Activated CD4-positive, alpha-beta T cell treated with anti-CD3 and anti-CD28 coated beads for 36 hours (primary cell): ENCODE measurements at regions of chr17 and their contacts with region 1.

Region 1: DNA sequence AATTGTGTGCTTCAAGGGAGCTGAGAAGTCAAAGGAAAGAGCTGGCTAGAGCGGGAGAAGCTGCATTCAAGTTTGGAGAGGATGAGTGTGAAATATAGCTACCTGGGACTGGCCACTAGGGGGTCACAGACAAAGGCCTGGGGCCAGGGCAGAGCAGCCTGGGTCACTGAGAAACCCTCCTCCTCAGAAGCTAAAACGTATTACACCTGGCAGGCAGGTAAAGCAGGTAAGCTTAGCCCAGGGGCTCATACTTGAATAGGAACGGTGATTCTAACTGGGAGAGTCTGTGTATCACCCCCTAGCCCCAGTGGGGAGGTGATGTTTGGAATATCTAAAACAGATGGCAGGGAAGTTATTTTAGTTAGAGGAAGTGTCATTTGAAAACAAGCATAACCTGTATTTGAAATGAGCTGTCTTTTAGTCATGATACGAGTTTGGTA is 6.8 kb downstream of the KRT37 start:
- DNase-seq: no peak
- ATAC-seq: no peak
- H3K4me3 Mint-ChIP-seq: no peak overlapping the region
- H3K27ac Mint-ChIP-seq: no peak overlapping the region
- H3K4me1 Mint-ChIP-seq: no peaks in the 10 kb centered on the region
- H3K27me3 Mint-ChIP-seq: no peaks in the 10 kb centered on the region

Region 2: DNA sequence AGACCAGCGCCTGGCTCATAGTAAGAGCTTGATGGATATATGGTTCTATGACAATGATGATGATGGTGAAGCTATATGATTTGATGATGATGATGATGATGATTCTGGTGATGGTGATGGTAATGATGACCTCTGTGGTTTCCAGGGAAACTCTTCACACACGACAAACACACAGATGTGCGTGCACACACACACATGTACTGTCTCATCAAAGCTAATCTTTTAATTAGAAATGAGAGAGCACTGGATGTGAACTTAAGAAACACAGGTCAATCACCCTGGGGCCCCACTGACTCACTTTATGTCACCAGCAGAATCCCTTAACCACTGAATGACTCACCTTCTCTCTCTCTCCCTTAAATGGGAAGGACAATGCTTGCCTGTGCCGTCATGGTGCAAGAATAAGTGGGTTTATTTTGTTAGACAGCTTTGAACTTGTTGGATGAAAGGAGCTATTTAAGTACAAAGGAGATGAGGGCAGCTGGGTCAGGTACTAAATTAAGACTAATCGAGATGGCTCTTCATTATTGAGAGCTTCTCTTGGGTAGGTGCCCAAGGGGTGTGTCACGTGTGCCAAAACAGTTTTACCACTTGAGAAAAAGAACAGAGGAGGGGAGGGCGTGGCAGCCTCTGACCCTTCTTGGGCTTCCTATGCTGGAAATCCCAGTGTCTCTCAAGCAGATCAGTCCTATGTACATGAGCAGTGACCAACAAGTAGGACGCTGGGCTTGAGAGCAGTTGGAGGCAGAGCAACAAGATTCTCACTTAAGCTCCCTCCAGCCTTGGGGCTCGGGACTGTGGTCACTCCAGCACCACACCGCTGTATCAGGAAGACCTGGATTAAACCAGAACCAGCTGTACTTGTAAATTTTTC is 13.6 kb before region 1 on chr17:
- CTCF ChIA-PET with region 1: interaction called, 13 read pairs
- POLR2A ChIA-PET with region 1: no interaction called
- intact Hi-C with region 1: no loop called
- DNase-seq: peak; percentile 80
- ATAC-seq: peak; percentile 91
- H3K4me3 Mint-ChIP-seq: peak overlapping the region; percentile 10
- H3K27ac Mint-ChIP-seq: peak overlapping the region; percentile 87
- H3K4me1 Mint-ChIP-seq: peaks cover 37% of the 10 kb centered on the region
- H3K27me3 Mint-ChIP-seq: peaks cover 2% of the 10 kb centered on the region

Region 3: DNA sequence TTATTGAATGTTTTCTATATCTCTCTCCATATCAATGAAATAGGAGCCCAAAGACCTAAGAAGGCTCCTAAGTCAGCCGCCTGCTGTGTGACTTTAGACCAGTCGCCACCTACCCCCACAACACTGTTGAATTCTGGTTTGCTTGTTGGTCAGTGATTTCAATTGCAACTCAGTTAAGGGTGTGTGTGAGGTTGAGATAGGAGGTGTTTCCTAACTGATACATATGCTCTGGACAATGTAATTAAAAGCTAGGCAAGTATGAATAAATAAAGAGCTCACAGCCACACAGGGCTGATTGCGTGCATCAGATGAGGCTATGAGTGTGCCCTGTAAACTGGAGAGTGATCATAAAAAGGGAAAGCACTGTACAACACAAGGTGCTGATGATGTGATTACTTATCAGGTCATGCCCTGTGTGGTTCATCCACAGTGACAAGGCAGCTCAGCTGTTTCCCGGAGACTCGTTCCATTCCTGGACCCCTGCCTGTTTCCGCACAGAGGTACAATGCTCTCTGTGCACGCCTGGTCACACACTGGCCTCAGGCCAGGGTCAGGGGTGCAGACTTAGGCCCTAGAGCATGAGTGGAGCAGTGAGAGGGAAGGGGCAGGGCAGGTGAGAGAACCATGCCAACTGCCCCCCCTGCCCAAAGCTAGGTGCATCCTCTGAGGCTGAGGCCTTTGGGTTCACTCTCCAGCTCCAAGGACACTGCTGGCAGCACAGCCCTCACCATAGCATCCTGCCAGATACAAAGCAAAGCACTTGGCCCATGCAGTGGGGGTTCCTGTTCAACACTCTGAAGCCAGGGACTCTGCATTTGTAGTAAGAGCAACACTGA is 66.6 kb after region 1 on chr17:
- CTCF ChIA-PET with region 1: no interaction called
- POLR2A ChIA-PET with region 1: no interaction called
- intact Hi-C with region 1: no loop called
- DNase-seq: no peak
- ATAC-seq: no peak
- H3K4me3 Mint-ChIP-seq: no peak overlapping the region
- H3K27ac Mint-ChIP-seq: no peak overlapping the region
- H3K4me1 Mint-ChIP-seq: no peaks in the 10 kb centered on the region
- H3K27me3 Mint-ChIP-seq: no peaks in the 10 kb centered on the region